CD8-positive, alpha-beta T cell (primary cell): ENCODE measurements at regions of chr6 and their contacts with region 1.

Region 1: GRCh38 chr6:138765896-138766655 is 7.5 kb upstream of the CCDC28A start:
- DNase-seq: peak in 2 of 9 experiments; percentile 34 to 52
- ATAC-seq: no peak
- H3K4me3 ChIP-seq: no peak overlapping the region
- H3K4me3 Mint-ChIP-seq: no peak overlapping the region
- H3K27ac ChIP-seq: no peak overlapping the region
- H3K27ac Mint-ChIP-seq: no peak overlapping the region
- H3K4me1 ChIP-seq: no peaks in the 10 kb centered on the region
- H3K4me1 Mint-ChIP-seq: no peaks in the 10 kb centered on the region
- H3K27me3 ChIP-seq: no peaks in the 10 kb centered on the region
- H3K27me3 Mint-ChIP-seq: no peaks in the 10 kb centered on the region
- CTCF ChIP-seq: peak; percentile 86

Region 2: GRCh38 chr6:138692058-138692977 is 73.8 kb before region 1 on chr6:
- CTCF ChIA-PET with region 1: interaction called, 26 read pairs
- POLR2A ChIA-PET with region 1: no interaction called
- intact Hi-C with region 1: loop called (anchors 1 to 2 kb)
- DNase-seq: peak; percentile 14 to 78 (median 48)
- ATAC-seq: peak; percentile 68
- H3K4me3 ChIP-seq: peak overlapping the region in 1 of 2 experiments; percentile 23
- H3K4me3 Mint-ChIP-seq: peak overlapping the region; percentile 81
- H3K27ac ChIP-seq: no peak overlapping the region
- H3K27ac Mint-ChIP-seq: no peak overlapping the region
- H3K4me1 ChIP-seq: peaks cover 5% of the 10 kb centered on the region
- H3K4me1 Mint-ChIP-seq: peaks cover 10% of the 10 kb centered on the region
- H3K27me3 ChIP-seq: peaks cover 0 to 6% of the 10 kb centered on the region in 2 experiments
- H3K27me3 Mint-ChIP-seq: peaks cover 30% of the 10 kb centered on the region
- CTCF ChIP-seq: peak; percentile 65

Region 3: GRCh38 chr6:138931660-138932059 is 165.6 kb after region 1 on chr6:
- CTCF ChIA-PET with region 1: no interaction called
- POLR2A ChIA-PET with region 1: no interaction called
- intact Hi-C with region 1: no loop called
- DNase-seq: no peak
- ATAC-seq: no peak
- H3K4me3 ChIP-seq: no peak overlapping the region
- H3K4me3 Mint-ChIP-seq: no peak overlapping the region
- H3K27ac ChIP-seq: no peak overlapping the region
- H3K27ac Mint-ChIP-seq: no peak overlapping the region
- H3K4me1 ChIP-seq: no peaks in the 10 kb centered on the region
- H3K4me1 Mint-ChIP-seq: peaks cover 7% of the 10 kb centered on the region
- H3K27me3 ChIP-seq: no peaks in the 10 kb centered on the region
- H3K27me3 Mint-ChIP-seq: no peaks in the 10 kb centered on the region
- CTCF ChIP-seq: no peak